ENCODE measurements at regions of chr2 and their contacts with region 1.

Region 1: GRCh38 chr2:46296840-46297545 is at the start of gene EPAS1:
- DNase-seq: peak; percentile 76
- ATAC-seq: peak; percentile 95
- H3K4me3 ChIP-seq: peak within 1 kb of the TSS; percentile 87
- H3K27ac ChIP-seq: peak within 1 kb of the TSS; percentile 82
- H3K4me1 ChIP-seq: peaks cover 7% of the 10 kb centered on the region; the same call in 1 of the 2 replicates
- H3K27me3 ChIP-seq: no peaks in the 10 kb centered on the region
- CTCF ChIP-seq: no peak
- POLR2A ChIP-seq: peak; percentile 97
- RAD21 ChIP-seq: 0 out of 2 replicates have a peak, but pooled peaks have one; percentile 26
- total RNA-seq, gene EPAS1: 21.9 and 40.7 TPM in 2 replicates

Region 2: GRCh38 chr2:45944074-45944473 is 352.9 kb before region 1 on chr2:
- CTCF ChIA-PET with region 1: no interaction called
- POLR2A ChIA-PET with region 1: no interaction called
- dilution Hi-C with region 1: no loop called
- in situ Hi-C with region 1: no loop called
- intact Hi-C with region 1: loop called (anchors 5 kb)
- DNase-seq: peak; percentile 81
- ATAC-seq: peak; percentile 86
- H3K4me3 ChIP-seq: no peak overlapping the region
- H3K27ac ChIP-seq: peak overlapping the region; percentile 39; the same call in 1 of the 2 replicates
- H3K4me1 ChIP-seq: peaks cover 29% of the 10 kb centered on the region
- H3K27me3 ChIP-seq: no peaks in the 10 kb centered on the region
- CTCF ChIP-seq: no peak
- POLR2A ChIP-seq: no peak
- RAD21 ChIP-seq: no peak

Region 3: DNA sequence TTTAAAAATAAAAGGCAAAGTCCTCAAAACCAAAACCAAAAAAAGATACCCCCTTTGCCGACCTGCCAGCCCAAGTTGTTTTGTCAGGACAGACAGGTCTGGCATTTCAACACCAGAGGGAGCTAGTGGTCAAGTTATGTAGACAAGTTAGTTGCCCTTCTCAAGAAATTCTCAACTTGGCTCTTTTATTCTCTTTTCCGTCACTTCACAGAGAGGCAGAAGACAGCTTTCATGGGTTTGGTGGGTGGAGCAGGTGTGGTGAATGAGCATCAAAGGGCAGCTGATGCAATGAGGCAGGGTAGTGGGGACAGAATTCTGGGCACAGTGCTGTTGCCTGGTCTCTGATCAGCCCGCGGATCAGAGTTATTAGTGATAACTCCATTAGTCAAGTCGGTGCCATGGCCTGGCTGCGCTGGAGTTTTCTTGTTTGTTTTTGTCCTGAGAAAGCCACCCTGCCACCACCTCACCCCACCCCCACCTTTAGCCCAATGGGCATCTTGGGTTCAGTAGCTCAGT is 303.5 kb before region 1 on chr2:
- CTCF ChIA-PET with region 1: interaction called, 3 read pairs
- POLR2A ChIA-PET with region 1: no interaction called
- dilution Hi-C with region 1: no loop called
- in situ Hi-C with region 1: no loop called
- intact Hi-C with region 1: loop called (anchors 1 kb)
- DNase-seq: peak; percentile 89
- ATAC-seq: peak; percentile 73
- H3K4me3 ChIP-seq: no peak overlapping the region
- H3K27ac ChIP-seq: peak overlapping the region; percentile 8; the same call in 1 of the 2 replicates
- H3K4me1 ChIP-seq: peaks cover 19% of the 10 kb centered on the region
- H3K27me3 ChIP-seq: no peaks in the 10 kb centered on the region
- CTCF ChIP-seq: peak; percentile 85
- POLR2A ChIP-seq: no peak
- RAD21 ChIP-seq: peak; percentile 92

Region 4: DNA sequence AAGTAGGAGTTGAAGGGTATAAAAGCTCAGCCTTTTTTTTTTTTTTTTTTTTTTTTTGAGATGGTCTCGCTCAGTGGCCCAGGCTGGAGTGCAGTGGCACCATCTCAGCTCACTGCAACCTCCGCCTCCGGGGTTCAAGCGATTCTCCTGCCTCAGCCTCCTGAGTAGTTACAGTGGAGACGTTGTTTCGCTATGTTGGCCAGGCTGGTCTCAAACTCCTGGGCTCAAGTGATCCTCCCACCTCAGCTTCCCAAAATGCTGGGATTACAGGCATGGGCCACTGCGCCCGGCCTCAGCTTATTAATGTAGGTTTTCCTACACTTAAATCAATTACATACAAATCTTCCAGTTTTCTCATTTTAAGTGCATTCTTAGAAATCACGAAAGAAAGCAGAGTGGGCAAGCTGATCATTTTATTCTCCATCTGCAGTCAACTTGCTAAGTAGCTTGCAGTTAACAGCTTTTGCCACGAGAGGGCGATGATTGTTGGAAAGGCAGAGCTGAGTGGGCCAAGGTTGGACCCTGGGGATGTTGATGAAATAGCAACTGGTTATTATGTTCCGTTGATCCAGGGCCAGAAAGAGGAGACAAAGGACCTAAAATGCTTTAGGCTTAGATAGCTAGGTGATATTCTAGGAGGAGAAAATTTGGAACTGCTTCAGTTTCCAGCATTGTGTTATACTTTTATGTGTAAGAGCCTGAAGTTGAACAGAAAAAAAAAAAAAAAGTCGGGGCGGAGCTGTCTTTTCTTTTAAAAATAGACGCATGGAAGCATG is 234.2 kb before region 1 on chr2:
- CTCF ChIA-PET with region 1: interaction called, 11 read pairs
- POLR2A ChIA-PET with region 1: interaction called, 6 read pairs
- dilution Hi-C with region 1: no loop called
- in situ Hi-C with region 1: loop called (anchors 5 kb)
- intact Hi-C with region 1: loop called (anchors 1 kb)
- DNase-seq: peak; percentile 87
- ATAC-seq: peak; percentile 66
- H3K4me3 ChIP-seq: no peak overlapping the region
- H3K27ac ChIP-seq: no peak overlapping the region
- H3K4me1 ChIP-seq: peaks cover 15% of the 10 kb centered on the region
- H3K27me3 ChIP-seq: no peaks in the 10 kb centered on the region
- CTCF ChIP-seq: peak; percentile 82
- POLR2A ChIP-seq: no peak
- RAD21 ChIP-seq: peak; percentile 95

Region 5: GRCh38 chr2:46252891-46253669 is 43.9 kb before region 1 on chr2:
- CTCF ChIA-PET with region 1: no interaction called
- POLR2A ChIA-PET with region 1: no interaction called
- dilution Hi-C with region 1: no loop called
- in situ Hi-C with region 1: no loop called
- intact Hi-C with region 1: no loop called
- DNase-seq: no peak
- ATAC-seq: peak; percentile 46; the same call in 1 of the 2 replicates
- H3K4me3 ChIP-seq: no peak overlapping the region
- H3K27ac ChIP-seq: no peak overlapping the region
- H3K4me1 ChIP-seq: peaks cover 6% of the 10 kb centered on the region; the same call in 1 of the 2 replicates
- H3K27me3 ChIP-seq: peaks cover 26% of the 10 kb centered on the region
- CTCF ChIP-seq: no peak
- POLR2A ChIP-seq: no peak
- RAD21 ChIP-seq: no peak

Region 6: DNA sequence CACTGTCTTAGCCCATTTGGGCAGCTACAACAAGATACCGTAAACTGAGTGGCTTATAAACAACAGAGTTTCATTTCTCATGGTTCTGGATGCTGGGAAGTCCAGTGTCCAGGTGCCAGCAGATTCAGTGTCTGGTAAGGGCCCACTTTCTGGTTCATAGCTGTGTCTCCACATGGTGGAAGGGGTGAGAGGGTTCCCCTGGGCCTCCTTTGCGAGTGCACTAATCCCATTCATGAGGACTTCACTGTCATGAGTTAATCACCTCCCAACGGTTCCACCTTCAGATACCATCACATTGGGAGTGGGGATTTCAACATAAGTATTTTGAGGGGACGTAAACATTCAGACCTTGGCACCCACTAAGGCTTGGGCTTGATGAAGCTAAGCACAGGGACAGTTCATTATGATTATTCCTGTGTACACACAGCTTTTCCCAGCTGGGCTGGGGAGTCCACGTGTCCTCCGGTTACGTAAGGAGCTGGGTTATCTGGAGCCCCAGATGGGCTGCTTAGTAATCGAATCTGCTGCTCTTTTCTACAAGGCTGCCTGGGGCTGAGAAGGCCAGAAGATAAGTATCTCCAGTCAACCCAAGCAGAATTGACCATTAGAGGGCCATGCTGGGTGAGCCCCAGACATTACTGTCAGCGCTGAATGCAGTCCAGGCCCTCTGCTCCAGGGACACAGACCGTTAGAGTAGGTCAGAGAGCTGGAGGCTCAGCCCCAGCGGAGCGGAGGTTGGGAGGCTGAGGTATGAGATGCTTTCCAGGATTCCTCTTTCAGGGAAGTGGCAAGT is 42.9 kb after region 1 on chr2:
- CTCF ChIA-PET with region 1: no interaction called
- POLR2A ChIA-PET with region 1: no interaction called
- dilution Hi-C with region 1: no loop called
- in situ Hi-C with region 1: no loop called
- intact Hi-C with region 1: loop called (anchors 5 kb)
- DNase-seq: peak; percentile 73
- ATAC-seq: peak; percentile 18
- H3K4me3 ChIP-seq: no peak overlapping the region
- H3K27ac ChIP-seq: peak overlapping the region; percentile 19; the same call in 1 of the 2 replicates
- H3K4me1 ChIP-seq: peaks cover 39% of the 10 kb centered on the region
- H3K27me3 ChIP-seq: no peaks in the 10 kb centered on the region
- CTCF ChIP-seq: no peak
- POLR2A ChIP-seq: no peak
- RAD21 ChIP-seq: no peak

Region 7: DNA sequence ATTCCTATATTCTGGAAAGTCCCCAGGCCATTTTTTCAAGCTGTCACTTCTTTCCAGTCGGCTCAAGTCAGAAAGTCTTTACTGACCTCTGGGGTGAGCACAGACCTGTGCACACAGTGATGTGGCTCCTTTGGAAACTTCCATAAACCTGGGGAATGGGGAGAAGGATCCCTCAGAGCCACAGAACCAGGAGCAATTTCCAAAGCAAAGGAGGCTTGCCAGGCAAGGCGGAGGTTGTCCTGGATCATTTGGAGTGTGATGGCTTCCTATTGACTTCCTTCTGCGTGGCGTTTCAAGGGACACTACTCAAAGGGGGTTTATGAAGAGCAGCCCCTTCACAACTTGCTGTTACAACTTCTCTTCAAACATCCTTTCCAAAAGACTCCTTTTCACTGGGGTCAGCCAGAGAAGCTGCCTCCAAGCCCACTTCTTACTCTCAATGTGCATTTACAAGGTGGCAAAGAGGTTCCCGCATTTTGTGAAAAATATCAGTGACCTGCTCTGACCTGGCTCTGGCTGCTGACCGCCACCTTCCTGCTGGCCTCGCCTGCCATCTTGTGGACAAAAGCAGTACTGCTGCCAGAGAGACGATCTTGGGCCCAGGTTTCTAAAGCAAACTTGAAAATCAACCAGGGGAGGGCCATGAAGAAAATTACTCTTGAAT is 164.2 kb after region 1 on chr2:
- CTCF ChIA-PET with region 1: no interaction called
- POLR2A ChIA-PET with region 1: interaction called, 8 read pairs
- dilution Hi-C with region 1: no loop called
- in situ Hi-C with region 1: no loop called
- intact Hi-C with region 1: loop called (anchors 1 kb)
- DNase-seq: peak; percentile 65
- ATAC-seq: peak; percentile 79
- H3K4me3 ChIP-seq: no peak overlapping the region
- H3K27ac ChIP-seq: peak overlapping the region; percentile 6; the same call in 1 of the 2 replicates
- H3K4me1 ChIP-seq: peaks cover 15% of the 10 kb centered on the region
- H3K27me3 ChIP-seq: no peaks in the 10 kb centered on the region
- CTCF ChIP-seq: peak; percentile 97
- POLR2A ChIP-seq: peak; percentile 55; the same call in 1 of the 2 replicates
- RAD21 ChIP-seq: peak; percentile 100

Region 8: GRCh38 chr2:47620770-47621437 is 1323.9 kb after region 1 on chr2:
- CTCF ChIA-PET with region 1: no interaction called
- POLR2A ChIA-PET with region 1: no interaction called
- dilution Hi-C with region 1: no loop called
- in situ Hi-C with region 1: no loop called
- intact Hi-C with region 1: no loop called
- DNase-seq: no peak
- ATAC-seq: no peak
- H3K4me3 ChIP-seq: no peak overlapping the region
- H3K27ac ChIP-seq: no peak overlapping the region
- H3K4me1 ChIP-seq: no peaks in the 10 kb centered on the region
- H3K27me3 ChIP-seq: peaks cover 25% of the 10 kb centered on the region
- CTCF ChIP-seq: no peak
- POLR2A ChIP-seq: no peak
- RAD21 ChIP-seq: no peak